HAP-1 (cell line): ENCODE measurements at regions of chr21 and their contacts with region 1.

Region 1: DNA sequence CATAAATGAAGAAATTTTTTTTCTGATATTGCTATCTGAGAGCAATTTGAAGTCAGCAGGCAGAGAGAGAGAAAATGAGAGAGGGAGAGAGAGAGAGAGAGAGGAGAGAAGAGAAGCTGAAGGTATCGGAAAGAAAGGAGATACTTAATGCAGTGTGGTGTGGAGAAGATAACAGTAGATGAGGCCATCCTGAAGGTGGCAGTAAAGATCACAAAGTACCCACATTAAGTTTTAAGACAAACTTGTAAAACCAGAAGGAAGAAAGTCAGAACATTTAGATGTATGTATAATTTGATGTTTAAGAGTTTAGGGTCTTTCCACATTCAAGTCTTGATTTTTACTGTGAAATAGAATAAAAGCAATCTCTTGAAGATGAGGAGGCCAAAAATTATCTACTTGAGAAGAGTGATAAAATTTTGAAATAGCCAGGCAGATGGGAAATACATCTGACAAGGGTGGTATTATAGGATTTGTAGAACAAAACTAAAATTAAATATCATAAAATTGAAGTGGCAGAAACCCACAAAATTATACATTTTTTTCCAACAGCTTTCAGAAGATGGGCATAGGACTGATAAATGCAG is 1753.4 kb downstream of the MRPL39 start:
- DNase-seq: peak; percentile 18 to 54
- H3K4me3 ChIP-seq: no peak overlapping the region
- H3K4me1 ChIP-seq: no peaks in the 10 kb centered on the region
- H3K27me3 ChIP-seq: 0 out of 2 replicates have a peak, but pooled peaks cover 2% of the 10 kb centered on the region

Region 2: DNA sequence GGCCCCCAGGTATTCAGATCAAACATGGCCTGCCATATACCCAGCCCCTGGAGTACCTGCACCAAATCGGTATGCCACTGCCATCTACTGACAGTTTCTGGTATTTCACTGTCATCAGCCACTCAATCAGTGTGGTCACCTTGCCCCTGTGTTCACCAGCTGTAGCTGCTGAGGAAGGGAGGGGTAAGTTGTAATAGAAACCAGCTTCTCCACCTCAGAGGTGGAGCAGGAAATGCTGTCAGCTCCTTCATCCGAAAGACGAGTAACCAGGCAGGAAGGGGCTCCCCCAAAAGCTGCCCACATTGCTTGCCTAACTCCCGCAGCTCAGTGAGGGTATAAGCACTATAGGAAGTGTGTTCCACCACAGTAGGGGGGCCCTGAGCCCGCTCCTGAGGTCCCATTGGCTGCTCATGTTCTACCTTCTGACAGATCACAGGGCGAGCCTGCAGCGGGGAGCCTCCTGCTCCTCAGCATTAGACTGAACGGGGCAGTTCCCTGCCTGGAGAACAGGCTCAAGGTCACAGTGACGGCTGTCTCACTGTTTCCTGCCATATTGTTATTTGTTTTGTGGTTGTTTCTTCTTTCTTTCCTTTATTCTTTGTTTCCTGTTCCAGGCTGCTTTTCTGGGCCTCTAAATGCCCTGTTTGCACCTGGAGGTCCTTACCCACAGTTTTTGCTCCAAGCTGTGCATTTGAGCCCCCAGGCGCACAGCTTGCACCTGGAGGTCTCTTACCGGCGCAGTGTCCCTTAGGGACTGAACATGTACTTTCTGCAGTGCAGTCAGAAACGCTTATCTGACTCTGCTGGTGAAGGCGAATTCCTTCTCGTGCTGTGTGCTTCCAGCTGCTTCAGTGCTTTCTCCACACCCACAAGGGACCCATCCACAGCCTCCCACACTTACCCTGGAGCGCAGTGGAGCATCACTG is 115.1 kb after region 1 on chr21:
- in situ Hi-C with region 1: loop called (anchors 10 kb)
- DNase-seq: peak; percentile 37 to 81
- H3K4me3 ChIP-seq: no peak overlapping the region
- H3K4me1 ChIP-seq: no peaks in the 10 kb centered on the region
- H3K27me3 ChIP-seq: no peaks in the 10 kb centered on the region

Region 3: DNA sequence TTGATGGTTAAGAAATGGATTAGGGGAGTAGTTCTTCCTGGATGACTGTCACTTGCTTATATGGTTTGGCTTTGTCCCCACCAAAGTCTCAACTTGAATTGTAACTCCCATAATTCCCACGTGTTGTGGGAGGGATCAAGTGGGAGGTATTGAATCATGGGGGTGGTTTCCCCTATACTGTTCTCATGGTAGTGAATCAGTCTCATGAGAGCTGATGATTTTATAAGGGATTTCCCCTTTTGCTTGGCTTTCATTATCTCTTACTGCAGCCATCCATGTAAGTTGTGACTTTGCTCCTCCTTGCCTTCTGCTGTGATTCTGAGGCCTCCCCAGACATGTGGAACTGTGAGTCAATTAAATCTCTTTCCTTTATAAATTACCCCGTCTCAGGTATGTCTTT is 132.3 kb after region 1 on chr21:
- in situ Hi-C with region 1: no loop called
- DNase-seq: no peak
- H3K4me3 ChIP-seq: no peak overlapping the region
- H3K4me1 ChIP-seq: no peaks in the 10 kb centered on the region
- H3K27me3 ChIP-seq: no peaks in the 10 kb centered on the region